ENCODE measurements at regions of chr7 and their contacts with region 1.

Region 1: GRCh38 chr7:67593794-67594193 is 597.2 kb downstream of the TYW1 start:
- DNase-seq: no peak
- ATAC-seq: no peak
- H3K4me3 Mint-ChIP-seq: no peak overlapping the region
- H3K27ac Mint-ChIP-seq: no peak overlapping the region
- H3K4me1 Mint-ChIP-seq: no peaks in the 10 kb centered on the region
- H3K27me3 Mint-ChIP-seq: no peaks in the 10 kb centered on the region

Region 2: DNA sequence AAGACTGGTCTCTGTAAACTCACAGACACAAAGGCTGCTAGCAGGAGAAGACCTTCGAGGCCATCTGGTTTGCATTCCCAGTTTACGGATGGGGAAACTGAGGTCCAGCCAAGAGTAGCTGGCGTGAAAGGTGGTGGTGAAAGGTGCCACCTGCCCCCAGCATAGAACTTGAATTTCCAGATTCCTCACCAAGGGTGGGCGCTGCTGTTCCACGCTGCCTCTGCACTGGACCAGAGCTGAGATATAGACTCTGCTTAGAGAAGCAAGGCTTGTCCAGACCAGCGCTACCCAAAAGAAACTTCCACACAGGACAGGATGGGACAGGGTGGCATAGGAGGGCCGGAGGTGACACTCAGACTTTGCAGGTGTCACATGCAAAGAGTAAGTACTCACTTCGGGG is 104.8 kb before region 1 on chr7:
- CTCF ChIA-PET with region 1: no interaction called
- POLR2A ChIA-PET with region 1: no interaction called
- intact Hi-C with region 1: loop called in 1 of 2 experiments (anchors 5 kb)
- DNase-seq: no peak
- ATAC-seq: no peak
- H3K4me3 Mint-ChIP-seq: no peak overlapping the region
- H3K27ac Mint-ChIP-seq: no peak overlapping the region
- H3K4me1 Mint-ChIP-seq: peaks cover 2% of the 10 kb centered on the region
- H3K27me3 Mint-ChIP-seq: peaks cover 3% of the 10 kb centered on the region

Region 3: GRCh38 chr7:67608806-67609205 is 15.0 kb after region 1 on chr7:
- CTCF ChIA-PET with region 1: no interaction called
- POLR2A ChIA-PET with region 1: no interaction called
- intact Hi-C with region 1: no loop called
- DNase-seq: no peak
- ATAC-seq: no peak
- H3K4me3 Mint-ChIP-seq: no peak overlapping the region
- H3K27ac Mint-ChIP-seq: no peak overlapping the region
- H3K4me1 Mint-ChIP-seq: no peaks in the 10 kb centered on the region
- H3K27me3 Mint-ChIP-seq: no peaks in the 10 kb centered on the region

Region 4: DNA sequence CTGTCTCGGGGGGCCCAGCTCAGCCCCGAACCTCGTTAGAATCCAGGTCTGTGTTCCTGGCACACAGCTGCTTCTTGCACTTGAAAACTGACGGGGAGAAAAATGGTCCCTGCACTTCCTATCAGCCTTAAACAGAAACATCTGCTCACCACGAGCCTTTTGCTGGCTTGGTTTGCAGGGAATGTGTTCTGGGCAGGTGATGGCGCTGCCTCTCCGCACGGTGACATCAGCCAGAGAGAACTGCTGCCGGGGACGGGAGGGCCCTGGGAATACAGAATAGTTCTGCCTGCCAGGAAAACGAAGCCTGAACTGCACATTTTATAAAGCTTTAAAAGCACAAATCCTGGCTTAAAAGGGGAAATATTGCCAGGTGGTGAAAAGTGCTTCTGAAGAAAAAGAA is 25.4 kb after region 1 on chr7:
- CTCF ChIA-PET with region 1: no interaction called
- POLR2A ChIA-PET with region 1: no interaction called
- intact Hi-C with region 1: no loop called
- DNase-seq: no peak
- ATAC-seq: no peak
- H3K4me3 Mint-ChIP-seq: no peak overlapping the region
- H3K27ac Mint-ChIP-seq: no peak overlapping the region
- H3K4me1 Mint-ChIP-seq: no peaks in the 10 kb centered on the region
- H3K27me3 Mint-ChIP-seq: peaks cover 6% of the 10 kb centered on the region

Region 5: GRCh38 chr7:67666369-67666768 is 72.6 kb after region 1 on chr7:
- CTCF ChIA-PET with region 1: no interaction called
- POLR2A ChIA-PET with region 1: no interaction called
- intact Hi-C with region 1: no loop called
- DNase-seq: no peak
- ATAC-seq: no peak
- H3K4me3 Mint-ChIP-seq: no peak overlapping the region
- H3K27ac Mint-ChIP-seq: no peak overlapping the region
- H3K4me1 Mint-ChIP-seq: no peaks in the 10 kb centered on the region
- H3K27me3 Mint-ChIP-seq: no peaks in the 10 kb centered on the region

Region 6: GRCh38 chr7:67863907-67864306 is 270.1 kb after region 1 on chr7:
- CTCF ChIA-PET with region 1: no interaction called
- POLR2A ChIA-PET with region 1: no interaction called
- intact Hi-C with region 1: no loop called
- DNase-seq: no peak
- ATAC-seq: no peak
- H3K4me3 Mint-ChIP-seq: no peak overlapping the region
- H3K27ac Mint-ChIP-seq: no peak overlapping the region
- H3K4me1 Mint-ChIP-seq: no peaks in the 10 kb centered on the region
- H3K27me3 Mint-ChIP-seq: no peaks in the 10 kb centered on the region

Measured in activated CD4-positive, alpha-beta T cell treated with anti-CD3 and anti-CD28 coated beads for 36 hours (primary cell).